ENCODE measurements at regions of chr7 and their contacts with region 1.

Region 1: GRCh38 chr7:105759670-105760550 is 116.5 kb downstream of the ATXN7L1 start:
- DNase-seq: no peak
- ATAC-seq: peak; percentile 14
- H3K4me3 Mint-ChIP-seq: no peak overlapping the region
- H3K27ac Mint-ChIP-seq: no peak overlapping the region
- H3K4me1 Mint-ChIP-seq: peaks cover 21% of the 10 kb centered on the region
- H3K27me3 Mint-ChIP-seq: peaks cover 3% of the 10 kb centered on the region

Region 2: GRCh38 chr7:105652359-105652993 is 107.4 kb before region 1 on chr7:
- CTCF ChIA-PET with region 1: interaction called, 20 read pairs
- DNase-seq: peak; percentile 74
- ATAC-seq: peak; percentile 87
- H3K4me3 Mint-ChIP-seq: no peak overlapping the region
- H3K27ac Mint-ChIP-seq: no peak overlapping the region
- H3K4me1 Mint-ChIP-seq: peaks cover 16% of the 10 kb centered on the region
- H3K27me3 Mint-ChIP-seq: no peaks in the 10 kb centered on the region

Region 3: DNA sequence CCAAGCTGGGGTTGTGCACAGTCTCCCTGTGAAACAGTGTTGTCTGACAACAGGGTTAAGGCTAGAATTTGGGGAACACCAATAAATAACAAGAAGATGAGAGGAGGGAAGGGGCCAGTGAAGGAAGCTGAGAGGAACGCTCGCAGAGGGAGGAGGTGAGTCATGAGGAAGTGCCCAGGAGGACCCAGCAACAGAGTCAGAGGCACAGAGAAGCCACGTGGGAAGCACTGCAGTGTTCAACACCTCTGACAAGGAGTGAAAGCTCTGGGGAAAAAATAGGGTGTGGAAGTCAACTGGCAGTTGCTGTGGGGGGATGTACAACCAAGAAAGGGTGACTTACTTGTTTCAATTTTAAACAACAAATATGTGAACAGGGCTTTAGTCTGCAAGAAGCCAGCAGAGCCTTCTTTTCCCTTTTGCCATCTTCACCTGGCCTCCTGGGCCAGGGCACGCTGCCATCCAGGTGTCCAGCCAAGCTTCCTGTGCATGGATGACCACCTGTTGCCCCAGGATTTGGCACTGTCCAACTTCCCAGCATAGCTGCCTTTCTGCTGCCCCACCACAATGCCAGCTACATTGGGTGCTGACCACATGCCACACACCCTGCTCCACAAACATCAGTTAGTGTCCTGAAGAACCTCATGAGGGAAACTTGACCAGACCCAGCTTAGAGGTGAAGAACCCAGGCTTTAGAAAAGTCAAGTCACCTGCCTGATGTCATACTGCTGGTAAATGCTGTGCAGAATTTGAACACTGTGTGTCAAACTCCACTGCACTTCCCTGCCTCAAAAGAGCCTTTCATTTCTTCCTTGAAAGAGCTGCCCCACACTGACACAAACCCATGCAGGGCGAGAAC is 46.9 kb after region 1 on chr7:
- CTCF ChIA-PET with region 1: interaction called, 13 read pairs
- DNase-seq: peak; percentile 86
- ATAC-seq: peak; percentile 59
- H3K4me3 Mint-ChIP-seq: peak overlapping the region; percentile 16
- H3K27ac Mint-ChIP-seq: peak overlapping the region; percentile 88
- H3K4me1 Mint-ChIP-seq: peaks cover 59% of the 10 kb centered on the region
- H3K27me3 Mint-ChIP-seq: peaks cover 3% of the 10 kb centered on the region

Region 4: GRCh38 chr7:105876091-105876963 is 116.4 kb after region 1 on chr7 and contains the start of gene ATXN7L1:
- CTCF ChIA-PET with region 1: interaction called, 27 read pairs
- DNase-seq: peak; percentile 88
- ATAC-seq: peak; percentile 98
- H3K4me3 Mint-ChIP-seq: peak within 1 kb of the TSS; percentile 87
- H3K27ac Mint-ChIP-seq: peak within 1 kb of the TSS; percentile 64
- H3K4me1 Mint-ChIP-seq: peaks cover 21% of the 10 kb centered on the region
- H3K27me3 Mint-ChIP-seq: peaks cover 18% of the 10 kb centered on the region
- total RNA-seq, gene ATXN7L1: 4.2 to 9.1 TPM

Region 5: GRCh38 chr7:106009403-106010226 is 249.7 kb after region 1 on chr7:
- CTCF ChIA-PET with region 1: interaction called, 19 read pairs
- DNase-seq: peak; percentile 76
- ATAC-seq: peak; percentile 96
- H3K4me3 Mint-ChIP-seq: no peak overlapping the region
- H3K27ac Mint-ChIP-seq: no peak overlapping the region
- H3K4me1 Mint-ChIP-seq: peaks cover 6% of the 10 kb centered on the region
- H3K27me3 Mint-ChIP-seq: peaks cover 30% of the 10 kb centered on the region

Region 6: DNA sequence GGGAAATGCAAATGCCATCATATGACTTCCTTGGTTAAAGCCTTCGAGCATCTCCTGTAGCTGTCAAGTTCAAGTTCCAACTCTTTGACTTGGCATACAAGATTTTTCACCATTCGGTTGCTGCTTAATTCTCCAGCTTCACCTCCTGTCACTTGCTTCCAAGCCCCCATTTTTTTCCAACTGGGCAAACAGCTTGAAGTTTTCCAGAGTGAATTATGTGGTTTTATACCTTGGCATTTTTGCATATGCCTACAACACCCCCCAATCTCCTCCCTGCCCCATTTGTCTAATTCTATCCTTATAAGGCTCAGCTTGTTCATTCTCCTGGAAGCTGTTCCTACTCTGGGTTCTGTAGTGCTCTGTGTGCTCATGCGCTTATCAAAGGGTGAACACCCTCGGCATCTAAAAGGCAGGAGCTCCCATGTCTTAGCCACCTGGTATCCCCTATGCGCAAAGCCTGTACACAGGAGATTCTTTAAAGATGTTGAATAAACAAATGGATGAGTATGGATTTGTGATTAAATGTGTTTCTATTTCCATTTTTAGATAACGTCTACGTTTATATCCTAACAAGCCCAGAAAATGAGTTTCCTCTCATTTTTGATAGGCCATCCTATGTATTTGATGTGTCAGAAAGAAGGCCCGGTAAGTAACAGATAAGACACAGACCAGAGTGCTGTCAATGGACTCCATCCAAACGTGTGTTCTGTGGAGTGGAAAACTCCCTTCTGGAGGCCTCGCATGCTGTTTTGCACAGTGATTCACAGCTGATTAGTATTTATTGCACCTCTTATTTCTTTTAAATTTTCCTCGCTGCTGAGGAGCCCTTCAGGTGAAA is 255.7 kb after region 1 on chr7:
- CTCF ChIA-PET with region 1: interaction called, 14 read pairs
- DNase-seq: no peak
- ATAC-seq: no peak
- H3K4me3 Mint-ChIP-seq: no peak overlapping the region
- H3K27ac Mint-ChIP-seq: no peak overlapping the region
- H3K4me1 Mint-ChIP-seq: peaks cover 7% of the 10 kb centered on the region
- H3K27me3 Mint-ChIP-seq: peaks cover 53% of the 10 kb centered on the region

Region 7: GRCh38 chr7:106041140-106041717 is 281.3 kb after region 1 on chr7:
- CTCF ChIA-PET with region 1: interaction called, 98 read pairs
- DNase-seq: peak; percentile 42
- ATAC-seq: peak; percentile 29
- H3K4me3 Mint-ChIP-seq: no peak overlapping the region
- H3K27ac Mint-ChIP-seq: no peak overlapping the region
- H3K4me1 Mint-ChIP-seq: no peaks in the 10 kb centered on the region
- H3K27me3 Mint-ChIP-seq: peaks cover 34% of the 10 kb centered on the region

Measured in activated CD8-positive, alpha-beta memory T cell treated with anti-CD3 and anti-CD28 coated beads, Interleukin-2, amount 10 ng/mL, durations not matched to agents 7 days and 5 days (primary cell).